ENCODE measurements at regions of chr10 and their contacts with region 1.

Region 1: GRCh38 chr10:77837240-77837924 is 89.2 kb downstream of the DLG5 start:
- DNase-seq: no peak
- ATAC-seq: peak; percentile 84
- H3K4me3 Mint-ChIP-seq: no peak overlapping the region
- H3K27ac Mint-ChIP-seq: no peak overlapping the region
- H3K4me1 Mint-ChIP-seq: peaks cover 8% of the 10 kb centered on the region
- H3K27me3 Mint-ChIP-seq: no peaks in the 10 kb centered on the region
- CTCF ChIP-seq: no peak

Region 2: DNA sequence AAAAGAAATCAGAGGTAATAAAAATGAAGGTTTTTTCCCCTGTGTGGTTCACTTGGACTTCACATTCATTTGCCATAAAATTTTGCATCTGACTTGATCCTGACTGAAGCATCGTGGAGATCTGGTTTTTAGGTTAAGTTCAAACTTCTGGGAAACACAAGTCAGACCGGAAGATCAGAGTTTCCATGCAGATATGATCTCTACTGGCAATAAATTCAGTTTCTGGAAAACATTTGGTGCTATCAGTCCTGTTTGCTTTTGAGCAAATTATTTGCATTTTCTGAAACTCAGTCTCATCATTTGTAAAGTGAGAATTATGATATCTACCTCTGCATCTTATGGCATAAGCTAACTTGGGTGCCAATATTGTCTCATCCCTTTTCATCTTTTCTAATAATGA is 118.4 kb before region 1 on chr10:
- CTCF ChIA-PET with region 1: interaction called, 6 read pairs
- POLR2A ChIA-PET with region 1: no interaction called
- intact Hi-C with region 1: loop called (anchors 1 kb)
- DNase-seq: no peak
- ATAC-seq: no peak
- H3K4me3 Mint-ChIP-seq: no peak overlapping the region
- H3K27ac Mint-ChIP-seq: no peak overlapping the region
- H3K4me1 Mint-ChIP-seq: peaks cover 2% of the 10 kb centered on the region
- H3K27me3 Mint-ChIP-seq: peaks cover 11% of the 10 kb centered on the region
- CTCF ChIP-seq: no peak

Region 3: GRCh38 chr10:77849039-77849664 is 11.8 kb after region 1 on chr10:
- CTCF ChIA-PET with region 1: no interaction called
- POLR2A ChIA-PET with region 1: no interaction called
- intact Hi-C with region 1: no loop called
- DNase-seq: no peak
- ATAC-seq: no peak
- H3K4me3 Mint-ChIP-seq: no peak overlapping the region
- H3K27ac Mint-ChIP-seq: no peak overlapping the region
- H3K4me1 Mint-ChIP-seq: peaks cover 2% of the 10 kb centered on the region
- H3K27me3 Mint-ChIP-seq: no peaks in the 10 kb centered on the region
- CTCF ChIP-seq: no peak

Region 4: DNA sequence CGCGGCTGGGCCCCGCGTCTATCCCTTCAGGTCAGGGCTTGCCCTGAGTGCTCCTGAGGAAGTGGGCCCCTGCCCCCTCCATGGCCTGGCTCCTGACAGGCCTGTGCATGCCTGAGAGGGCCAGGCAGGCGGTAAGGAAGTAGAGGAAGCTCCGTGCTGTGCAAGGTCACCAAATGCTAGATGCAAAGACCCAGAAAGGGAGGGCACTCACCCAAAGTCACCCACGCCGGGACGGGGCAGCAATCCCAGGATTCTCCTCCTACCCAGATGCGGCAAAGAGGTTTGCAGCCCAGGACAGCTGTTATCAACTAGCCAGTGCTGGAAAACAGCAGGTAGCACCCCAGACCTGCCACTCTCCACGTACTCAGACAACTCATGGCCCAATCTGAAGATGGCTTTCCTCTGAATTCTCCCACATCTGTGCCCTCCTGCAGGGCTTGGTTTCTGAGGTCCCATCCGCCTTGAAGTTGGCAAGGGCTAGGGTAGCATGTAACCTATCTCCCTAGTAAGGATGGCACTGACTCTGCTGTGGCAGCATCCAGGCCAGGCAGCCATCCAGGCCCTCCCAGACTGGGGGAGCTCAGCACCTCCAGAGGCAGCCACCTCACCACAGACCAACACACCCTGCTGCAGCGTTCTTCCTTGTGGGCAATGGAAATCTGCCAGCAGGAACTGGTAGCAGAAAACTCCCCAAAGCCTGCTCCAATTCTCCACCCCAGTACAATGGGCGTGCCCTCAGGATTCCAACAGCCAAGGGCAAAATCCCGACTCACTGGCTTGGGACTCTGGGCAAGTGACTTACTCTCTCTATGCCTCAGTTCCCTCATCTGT is 61.5 kb after region 1 on chr10:
- CTCF ChIA-PET with region 1: no interaction called
- POLR2A ChIA-PET with region 1: no interaction called
- intact Hi-C with region 1: no loop called
- DNase-seq: no peak
- ATAC-seq: no peak
- H3K4me3 Mint-ChIP-seq: no peak overlapping the region
- H3K27ac Mint-ChIP-seq: no peak overlapping the region
- H3K4me1 Mint-ChIP-seq: no peaks in the 10 kb centered on the region
- H3K27me3 Mint-ChIP-seq: peaks cover 10% of the 10 kb centered on the region
- CTCF ChIP-seq: no peak

Region 5: GRCh38 chr10:78047314-78047891 is 210.0 kb after region 1 on chr10:
- CTCF ChIA-PET with region 1: no interaction called
- POLR2A ChIA-PET with region 1: no interaction called
- intact Hi-C with region 1: no loop called
- DNase-seq: peak; percentile 63
- ATAC-seq: peak; percentile 74
- H3K4me3 Mint-ChIP-seq: no peak overlapping the region
- H3K27ac Mint-ChIP-seq: no peak overlapping the region
- H3K4me1 Mint-ChIP-seq: peaks cover 22% of the 10 kb centered on the region
- H3K27me3 Mint-ChIP-seq: no peaks in the 10 kb centered on the region
- CTCF ChIP-seq: peak; percentile 45

Region 6: DNA sequence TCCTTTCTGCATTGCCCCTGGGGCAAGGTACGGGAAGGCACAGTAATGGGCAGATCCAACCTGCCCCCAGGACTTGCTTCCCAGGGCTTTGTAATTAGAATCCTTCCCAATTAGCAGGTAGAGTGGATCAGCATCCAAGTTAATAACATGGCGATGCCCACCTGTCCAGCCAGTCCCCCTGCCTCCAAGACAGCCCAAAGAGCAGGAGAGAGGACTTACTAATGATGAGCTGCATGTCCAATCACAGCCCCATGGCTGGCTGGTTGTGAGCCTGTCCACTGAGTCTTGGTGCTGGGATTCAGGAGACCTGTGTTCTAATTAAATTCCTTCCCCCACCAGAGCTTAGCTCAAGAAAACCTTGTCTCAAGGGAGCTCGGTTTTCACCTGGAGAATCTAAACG is 245.3 kb after region 1 on chr10:
- CTCF ChIA-PET with region 1: no interaction called
- POLR2A ChIA-PET with region 1: no interaction called
- intact Hi-C with region 1: no loop called
- DNase-seq: no peak
- ATAC-seq: no peak
- H3K4me3 Mint-ChIP-seq: no peak overlapping the region
- H3K27ac Mint-ChIP-seq: no peak overlapping the region
- H3K4me1 Mint-ChIP-seq: no peaks in the 10 kb centered on the region
- H3K27me3 Mint-ChIP-seq: peaks cover 14% of the 10 kb centered on the region
- CTCF ChIP-seq: no peak

Measured in activated B cell treated with CpG ODN at 0.5 μM for 24 hours (primary cell).